Ovary (tissue), 10 donors: ENCODE measurements at regions of chr2 and their contacts with region 1.

Region 1: DNA sequence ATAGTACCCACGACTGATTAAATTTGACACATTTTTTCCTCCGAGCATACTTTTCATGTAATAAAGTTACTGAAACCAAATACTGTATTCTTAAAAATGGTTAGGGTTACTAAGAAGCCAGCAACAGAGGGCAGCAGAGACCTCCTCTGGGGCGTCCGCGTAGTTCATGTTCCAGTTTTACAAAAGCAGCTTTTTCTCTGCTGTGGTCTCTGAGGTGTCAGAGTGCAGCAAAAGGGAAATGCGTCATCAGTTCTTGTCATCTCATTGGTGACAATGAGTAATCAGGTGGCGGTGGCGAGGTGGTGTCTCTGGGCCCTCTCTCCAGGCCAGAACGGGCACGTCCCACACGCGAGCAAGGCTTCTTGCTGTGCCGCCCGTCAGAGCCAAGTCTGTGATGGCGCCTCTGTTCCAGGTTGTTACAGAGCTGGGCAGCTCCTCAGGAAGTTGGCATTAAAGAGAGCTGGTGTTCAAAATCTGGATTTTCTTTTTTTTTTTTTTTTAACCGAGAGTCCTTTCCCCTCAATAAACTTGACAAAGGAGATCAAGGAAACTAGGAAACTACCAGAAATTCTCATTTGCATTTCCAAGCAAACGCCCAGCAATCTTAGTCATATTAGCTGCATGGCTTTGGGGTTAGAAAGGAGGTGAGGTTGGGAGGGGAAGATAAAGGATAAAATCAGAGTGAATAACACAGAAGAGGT is 98.6 kb upstream of the BZW1 start:
- DNase-seq: peak; percentile 68 to 81 (median 70)
- H3K4me3 ChIP-seq: peak overlapping the region; percentile 26
- H3K27ac ChIP-seq: no peak overlapping the region
- H3K4me1 ChIP-seq: no peaks in the 10 kb centered on the region
- H3K27me3 ChIP-seq: no peaks in the 10 kb centered on the region
- CTCF ChIP-seq: peak; percentile 47 to 82 (median 82)
- EP300 ChIP-seq: no peak
- POLR2A ChIP-seq: peak; percentile 34

Region 2: DNA sequence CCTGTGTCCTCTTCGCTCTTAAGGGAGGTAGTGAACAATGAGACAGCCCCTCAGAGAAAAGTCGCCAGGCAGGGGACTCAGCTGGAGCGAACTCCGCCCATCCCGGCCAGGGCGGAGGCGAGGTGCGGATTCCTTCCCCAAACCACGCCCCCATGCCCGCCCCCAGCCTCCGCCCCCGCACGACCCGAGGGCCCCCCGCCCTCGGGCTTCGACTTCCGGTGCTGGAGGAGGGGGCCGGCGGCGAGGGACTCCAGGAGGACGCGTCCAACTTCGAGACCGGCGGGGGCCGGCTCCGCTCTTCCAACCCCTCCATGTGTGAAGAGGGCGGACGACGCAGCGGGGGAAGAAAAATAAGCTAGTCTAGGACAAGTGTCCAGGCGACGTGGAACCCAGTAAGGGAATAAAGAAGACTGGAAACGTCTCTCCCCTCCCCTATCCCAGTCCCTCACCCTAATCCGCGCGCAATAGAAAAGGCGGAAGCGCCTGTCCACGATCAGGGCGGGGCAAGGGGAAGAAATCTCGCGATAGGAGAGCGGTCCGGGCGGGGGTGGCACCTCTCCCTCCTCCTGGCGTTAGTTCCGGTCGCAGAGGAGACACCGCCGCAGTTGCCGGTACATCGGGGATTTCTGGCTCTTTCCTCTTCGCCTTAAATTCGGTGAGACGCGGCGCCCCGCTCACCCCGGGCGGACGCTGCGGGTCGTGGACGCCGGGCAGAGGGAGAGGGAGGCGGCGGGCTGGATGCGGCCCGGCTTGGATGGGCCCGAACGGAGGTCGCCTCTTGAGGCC is 98.4 kb after region 1 on chr2 and contains the start of gene BZW1:
- intact Hi-C with region 1: loop called in 2 of 4 experiments (anchors 5 to 10 kb)
- DNase-seq: peak; percentile 97 to 98 (median 98)
- H3K4me3 ChIP-seq: peak within 1 kb of the TSS; percentile 78
- H3K27ac ChIP-seq: peak within 1 kb of the TSS; percentile 74 to 95
- H3K4me1 ChIP-seq: peaks cover 2% of the 10 kb centered on the region
- H3K27me3 ChIP-seq: no peaks in the 10 kb centered on the region
- CTCF ChIP-seq: peak in 1 of 3 donors; percentile 13
- EP300 ChIP-seq: no peak
- POLR2A ChIP-seq: peak; percentile 96
- total RNA-seq, gene BZW1: 104 to 278 (median 156) TPM

Region 3: DNA sequence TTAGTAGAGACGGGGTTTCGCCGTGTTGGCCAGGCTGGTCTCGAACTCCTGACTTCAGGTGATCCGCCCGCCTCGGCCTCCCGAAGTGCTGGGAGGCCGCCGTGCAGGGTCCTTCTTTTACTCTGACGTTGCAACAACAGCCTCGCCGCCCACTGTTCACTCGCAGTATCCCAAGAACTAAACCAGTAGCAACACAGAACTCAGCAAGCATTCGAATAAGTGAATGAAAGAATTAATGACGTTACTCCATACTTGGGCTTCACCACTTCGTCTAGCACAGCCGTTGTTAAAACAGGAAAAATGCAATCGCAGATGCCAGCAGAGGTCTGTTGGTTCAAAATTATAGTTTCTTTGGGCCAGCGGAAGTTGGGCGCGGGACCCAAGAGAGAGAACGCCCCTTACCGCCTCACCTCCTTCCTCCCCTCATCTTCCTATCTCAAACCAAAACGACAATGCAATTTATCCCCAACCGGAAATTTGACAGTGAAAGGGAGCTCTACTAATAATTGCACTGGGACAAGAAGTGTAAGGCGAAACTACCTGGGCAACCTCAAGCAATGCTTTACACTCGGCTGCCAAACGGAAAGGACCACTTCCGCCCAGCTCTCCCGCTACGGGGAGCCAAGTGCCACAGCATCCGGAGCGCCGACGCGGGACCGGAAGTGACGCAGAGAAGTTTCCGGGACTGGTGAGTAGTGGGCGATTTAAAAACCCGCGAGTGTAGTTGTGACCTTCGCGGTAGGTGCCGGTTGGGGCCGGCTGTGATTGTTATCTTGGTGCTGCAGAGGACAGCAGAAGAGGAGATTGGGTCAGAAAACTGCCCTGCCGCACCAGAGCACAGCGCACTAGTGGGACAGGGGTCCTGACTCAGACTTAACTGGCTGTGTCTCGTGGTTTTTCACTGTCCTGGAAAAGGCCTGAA is 175.8 kb after region 1 on chr2 and contains the starts of genes NIF3L1 and PPIL3:
- intact Hi-C with region 1: loop called in 2 of 4 experiments (anchors 10 kb)
- DNase-seq: peak; percentile 94 to 96 (median 94)
- H3K4me3 ChIP-seq: peak within 1 kb of the TSS; percentile 66
- H3K27ac ChIP-seq: peak within 1 kb of the TSS; percentile 66 to 78
- H3K4me1 ChIP-seq: peaks cover 7% of the 10 kb centered on the region
- H3K27me3 ChIP-seq: no peaks in the 10 kb centered on the region
- CTCF ChIP-seq: no peak
- EP300 ChIP-seq: no peak
- POLR2A ChIP-seq: no peak
- total RNA-seq, gene NIF3L1: 12.8 to 19.8 (median 16.4) TPM
- total RNA-seq, gene PPIL3: 19.1 to 50.9 (median 38.2) TPM